Activated CD4-positive, alpha-beta T cell treated with anti-CD3 and anti-CD28 coated beads, Interleukin-2, amount 10 ng/mL, durations not matched to agents 24 days and 14 days (primary cell): ENCODE measurements at regions of chr2 and their contacts with region 1.

Region 1: DNA sequence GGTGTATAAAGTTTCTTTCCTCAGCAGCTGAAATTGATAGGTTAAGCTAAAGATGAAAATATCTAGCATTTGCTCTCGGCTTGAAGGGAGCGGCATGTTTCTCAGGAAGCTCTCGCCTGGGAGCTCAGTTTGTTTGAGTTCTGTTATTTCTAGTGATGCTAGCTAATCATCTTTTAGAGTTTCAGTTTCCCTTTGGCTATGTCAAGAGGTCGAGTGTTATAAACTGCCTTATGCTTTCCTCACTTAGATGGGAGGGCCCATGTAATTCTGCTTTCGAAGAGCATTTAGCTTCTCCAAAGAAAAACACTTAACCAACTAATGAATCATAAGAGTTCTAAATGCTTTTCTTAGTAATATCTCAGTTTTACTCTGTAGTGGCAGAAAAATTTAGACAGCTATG is 33.6 kb downstream of the PLCL1 start:
- DNase-seq: peak; percentile 79
- H3K4me3 Mint-ChIP-seq: peak overlapping the region; percentile 64
- H3K27ac Mint-ChIP-seq: peak overlapping the region; percentile 70
- H3K4me1 Mint-ChIP-seq: peaks cover 26% of the 10 kb centered on the region
- H3K27me3 Mint-ChIP-seq: peaks cover 7% of the 10 kb centered on the region

Region 2: DNA sequence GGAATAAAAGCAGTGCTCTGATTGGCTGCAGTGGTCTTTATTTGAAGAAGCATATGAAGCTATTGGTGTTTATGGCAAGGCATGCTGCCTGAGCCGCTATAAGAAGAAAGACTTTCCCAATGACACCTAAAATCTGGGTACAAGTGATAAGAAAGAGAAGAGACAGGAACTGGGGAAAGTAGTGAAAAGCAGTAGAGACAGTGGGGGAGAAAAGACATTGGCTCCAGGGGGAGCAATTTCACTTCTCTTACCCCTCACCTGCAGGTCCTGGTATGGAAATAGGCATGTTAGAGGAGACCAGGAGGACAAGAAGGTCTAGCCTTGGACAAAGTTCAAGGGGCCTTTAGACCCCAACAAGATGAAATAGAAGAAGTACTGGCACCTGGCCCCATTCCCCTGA is 13.4 kb after region 1 on chr2:
- intact Hi-C with region 1: loop called (anchors 1 kb)
- DNase-seq: no peak
- H3K4me3 Mint-ChIP-seq: no peak overlapping the region
- H3K27ac Mint-ChIP-seq: no peak overlapping the region
- H3K4me1 Mint-ChIP-seq: peaks cover 20% of the 10 kb centered on the region
- H3K27me3 Mint-ChIP-seq: no peaks in the 10 kb centered on the region

Region 3: GRCh38 chr2:197869501-197870111 is 31.6 kb after region 1 on chr2:
- intact Hi-C with region 1: loop called (anchors 1 kb)
- DNase-seq: peak; percentile 73
- H3K4me3 Mint-ChIP-seq: peak overlapping the region; percentile 75
- H3K27ac Mint-ChIP-seq: peak overlapping the region; percentile 84
- H3K4me1 Mint-ChIP-seq: peaks cover 38% of the 10 kb centered on the region
- H3K27me3 Mint-ChIP-seq: no peaks in the 10 kb centered on the region

Region 4: DNA sequence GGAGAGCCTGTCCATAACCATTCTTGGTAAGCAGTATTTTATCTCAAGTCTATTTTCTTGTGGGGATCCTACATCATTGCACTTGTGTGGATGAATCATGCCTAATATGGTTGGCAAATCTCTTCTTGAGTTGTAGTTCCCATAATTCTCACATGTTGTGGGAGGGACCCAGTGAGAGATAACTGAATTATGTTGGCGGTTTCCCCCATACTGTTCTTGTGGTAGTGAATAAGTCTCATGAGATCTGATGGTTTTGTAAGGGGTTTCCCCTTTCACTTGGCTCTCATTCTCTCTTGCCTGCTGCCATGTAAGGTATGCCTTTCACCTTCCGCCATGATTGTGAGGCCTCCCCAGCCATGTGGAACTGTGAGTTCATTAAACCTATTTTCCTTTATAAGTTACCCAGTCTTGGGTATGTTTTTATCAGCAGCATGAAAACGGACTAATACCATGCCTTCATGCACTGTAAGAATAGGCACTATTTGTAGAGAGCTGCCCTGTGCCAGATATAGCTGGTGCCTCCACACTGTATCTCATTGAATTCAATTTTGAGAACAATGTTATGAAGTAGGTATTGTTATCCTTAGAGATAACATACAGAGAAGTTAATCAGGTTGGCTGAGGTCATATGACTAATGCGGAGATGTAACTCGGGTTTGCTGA is 114.6 kb after region 1 on chr2:
- intact Hi-C with region 1: loop called (anchors 5 kb)
- DNase-seq: no peak
- H3K4me3 Mint-ChIP-seq: no peak overlapping the region
- H3K27ac Mint-ChIP-seq: no peak overlapping the region
- H3K4me1 Mint-ChIP-seq: peaks cover 8% of the 10 kb centered on the region
- H3K27me3 Mint-ChIP-seq: peaks cover 5% of the 10 kb centered on the region

Region 5: DNA sequence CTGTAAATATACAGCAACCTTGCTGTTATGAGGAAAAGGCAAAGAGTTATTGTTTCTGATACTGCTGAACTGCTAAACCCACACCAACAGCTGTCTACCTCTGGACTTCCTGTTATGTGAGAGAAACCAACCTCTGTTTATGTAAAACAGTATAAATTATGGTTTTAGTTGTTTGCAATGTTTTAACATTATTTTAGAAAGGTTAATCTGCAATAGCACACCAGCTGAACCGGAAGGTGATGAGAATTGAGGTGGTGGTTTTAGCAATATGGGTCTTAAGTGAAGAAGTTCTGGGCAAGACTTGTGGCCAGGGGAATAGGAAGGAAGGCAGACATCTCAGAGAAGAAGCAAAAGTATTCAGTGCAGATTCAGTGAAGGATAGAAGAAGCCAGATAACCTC is 204.2 kb after region 1 on chr2:
- intact Hi-C with region 1: loop called (anchors 1 kb)
- DNase-seq: no peak
- H3K4me3 Mint-ChIP-seq: no peak overlapping the region
- H3K27ac Mint-ChIP-seq: no peak overlapping the region
- H3K4me1 Mint-ChIP-seq: peaks cover 6% of the 10 kb centered on the region
- H3K27me3 Mint-ChIP-seq: no peaks in the 10 kb centered on the region